ENCODE measurements at regions of chr4 and their contacts with region 1.

Region 1: DNA sequence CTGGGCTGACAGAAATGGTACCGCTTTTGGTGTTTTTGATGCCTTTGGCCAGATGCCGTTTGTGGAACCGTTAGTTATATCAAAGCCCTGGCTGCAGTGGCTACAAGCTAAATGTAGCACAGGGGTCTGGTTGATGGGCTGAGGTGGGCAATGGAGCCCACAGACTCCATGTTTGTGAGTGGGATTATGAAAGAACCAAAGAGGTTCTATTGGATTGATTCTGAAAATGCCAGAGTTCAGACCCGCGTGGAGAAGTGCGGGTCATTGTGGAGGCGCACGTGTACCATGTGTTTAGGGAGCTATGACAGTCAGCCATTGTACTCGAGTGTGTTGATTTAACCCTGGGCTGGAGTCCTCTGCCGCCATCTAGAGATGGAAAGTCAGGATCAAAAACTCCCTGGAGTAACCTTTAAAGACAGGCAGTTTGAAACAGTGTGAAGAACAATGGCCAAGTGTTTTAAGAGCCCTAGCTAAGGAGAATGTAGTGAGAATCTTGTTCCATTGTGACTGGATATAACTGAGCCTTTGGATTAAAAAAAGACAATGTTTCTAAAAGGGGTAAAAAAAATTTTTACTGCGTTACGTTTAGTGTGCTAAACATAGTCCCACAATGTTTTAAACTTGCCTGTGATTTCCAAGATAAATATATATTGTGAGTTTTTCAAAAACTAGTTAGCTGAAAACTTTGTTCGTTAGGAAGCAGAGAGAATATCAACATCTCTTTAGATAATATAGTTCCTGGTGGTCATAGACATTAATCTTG is 12.7 kb downstream of the ART3 start:
- DNase-seq: peak; percentile 7
- H3K4me3 ChIP-seq: no peak overlapping the region
- H3K27ac ChIP-seq: no peak overlapping the region
- H3K27me3 ChIP-seq: peaks cover 14% of the 10 kb centered on the region
- CTCF ChIP-seq: peak; percentile 77

Region 2: GRCh38 chr4:75948822-75949444 is 138.3 kb before region 1 on chr4:
- CTCF ChIA-PET with region 1: no interaction called
- POLR2A ChIA-PET with region 1: no interaction called
- DNase-seq: no peak
- H3K4me3 ChIP-seq: no peak overlapping the region
- H3K27ac ChIP-seq: no peak overlapping the region
- H3K27me3 ChIP-seq: no peaks in the 10 kb centered on the region
- CTCF ChIP-seq: no peak

Region 3: GRCh38 chr4:75989846-75990528 is 97.2 kb before region 1 on chr4:
- CTCF ChIA-PET with region 1: interaction called, 64 read pairs
- POLR2A ChIA-PET with region 1: no interaction called
- DNase-seq: no peak
- H3K4me3 ChIP-seq: peak overlapping the region; percentile 96
- H3K27ac ChIP-seq: peak overlapping the region; percentile 73
- H3K27me3 ChIP-seq: no peaks in the 10 kb centered on the region
- CTCF ChIP-seq: no peak

Region 4: GRCh38 chr4:76074468-76074867 is 12.7 kb before region 1 on chr4 and contains the start of gene ART3:
- CTCF ChIA-PET with region 1: interaction called, 12 read pairs
- POLR2A ChIA-PET with region 1: no interaction called
- DNase-seq: no peak
- H3K4me3 ChIP-seq: no peak within 1 kb of the TSS
- H3K27ac ChIP-seq: no peak within 1 kb of the TSS
- H3K27me3 ChIP-seq: peaks cover 5% of the 10 kb centered on the region
- CTCF ChIP-seq: no peak
- polyA plus RNA-seq, gene ART3: 0.20 TPM in 1 of 2 replicates, not detected in the other

Region 5: DNA sequence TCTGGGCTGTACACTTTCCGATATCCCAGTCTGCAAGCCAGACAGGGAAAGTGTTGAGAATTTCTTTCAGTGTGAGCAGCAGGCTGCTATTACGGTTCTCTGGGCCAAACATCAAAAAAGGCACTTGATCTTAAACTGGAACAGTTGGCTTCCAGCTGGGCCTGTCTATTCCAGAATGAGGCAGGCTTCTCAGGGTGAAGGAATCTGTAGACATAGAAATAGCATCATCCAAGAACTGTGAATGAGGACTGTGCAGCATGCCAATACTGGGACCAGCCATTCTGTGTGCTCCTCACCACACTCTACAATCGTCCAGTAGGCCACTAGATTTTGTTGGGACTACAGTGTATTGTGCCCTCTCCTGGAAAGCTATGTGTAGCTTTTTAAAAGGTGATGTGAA is 18.5 kb after region 1 on chr4:
- CTCF ChIA-PET with region 1: interaction called, 27 read pairs
- POLR2A ChIA-PET with region 1: no interaction called
- DNase-seq: no peak
- H3K4me3 ChIP-seq: no peak overlapping the region
- H3K27ac ChIP-seq: no peak overlapping the region
- H3K27me3 ChIP-seq: peaks cover 24% of the 10 kb centered on the region
- CTCF ChIP-seq: no peak